ENCODE measurements at regions of chr20 and their contacts with region 1.

Region 1: GRCh38 chr20:17431621-17432364 is 99.4 kb downstream of the BFSP1 start:
- DNase-seq: peak; percentile 72
- ATAC-seq: peak; percentile 79
- H3K4me3 Mint-ChIP-seq: no peak overlapping the region
- H3K27ac Mint-ChIP-seq: no peak overlapping the region
- H3K4me1 Mint-ChIP-seq: peaks cover 25% of the 10 kb centered on the region
- H3K27me3 Mint-ChIP-seq: no peaks in the 10 kb centered on the region
- CTCF ChIP-seq: peak; percentile 93

Region 2: GRCh38 chr20:17442588-17442987 is 10.8 kb after region 1 on chr20:
- CTCF ChIA-PET with region 1: interaction called, 13 read pairs
- POLR2A ChIA-PET with region 1: interaction called, 4 read pairs
- DNase-seq: peak; percentile 38
- ATAC-seq: peak; percentile 70
- H3K4me3 Mint-ChIP-seq: no peak overlapping the region
- H3K27ac Mint-ChIP-seq: no peak overlapping the region
- H3K4me1 Mint-ChIP-seq: no peaks in the 10 kb centered on the region
- H3K27me3 Mint-ChIP-seq: no peaks in the 10 kb centered on the region
- CTCF ChIP-seq: peak; percentile 37; the same call in 1 of the 2 replicates

Region 3: GRCh38 chr20:17449031-17449430 is 17.2 kb after region 1 on chr20:
- CTCF ChIA-PET with region 1: interaction called, 10 read pairs
- POLR2A ChIA-PET with region 1: no interaction called
- DNase-seq: no peak
- ATAC-seq: peak; percentile 79
- H3K4me3 Mint-ChIP-seq: no peak overlapping the region
- H3K27ac Mint-ChIP-seq: no peak overlapping the region
- H3K4me1 Mint-ChIP-seq: no peaks in the 10 kb centered on the region
- H3K27me3 Mint-ChIP-seq: no peaks in the 10 kb centered on the region
- CTCF ChIP-seq: no peak